A549 (cell line): ENCODE measurements at regions of chr5 and their contacts with region 1.

Region 1: GRCh38 chr5:98911280-98912040 is 17.3 kb downstream of the CHD1 start:
- DNase-seq: no peak
- ATAC-seq: no peak
- H3K4me3 ChIP-seq: no peak overlapping the region
- H3K27ac ChIP-seq: no peak overlapping the region
- H3K4me1 ChIP-seq: peaks cover 2% of the 10 kb centered on the region; the same call in 2 of the 3 replicates
- CTCF ChIP-seq: no peak
- EP300 ChIP-seq: no peak
- POLR2A ChIP-seq: no peak
- RAD21 ChIP-seq: no peak

Region 2: GRCh38 chr5:98604721-98605425 is 306.6 kb before region 1 on chr5:
- CTCF ChIA-PET with region 1: no interaction called
- POLR2A ChIA-PET with region 1: no interaction called
- DNase-seq: no peak
- ATAC-seq: no peak
- H3K4me3 ChIP-seq: no peak overlapping the region
- H3K27ac ChIP-seq: no peak overlapping the region
- H3K4me1 ChIP-seq: no peaks in the 10 kb centered on the region
- CTCF ChIP-seq: no peak
- EP300 ChIP-seq: no peak
- POLR2A ChIP-seq: no peak
- RAD21 ChIP-seq: no peak

Region 3: DNA sequence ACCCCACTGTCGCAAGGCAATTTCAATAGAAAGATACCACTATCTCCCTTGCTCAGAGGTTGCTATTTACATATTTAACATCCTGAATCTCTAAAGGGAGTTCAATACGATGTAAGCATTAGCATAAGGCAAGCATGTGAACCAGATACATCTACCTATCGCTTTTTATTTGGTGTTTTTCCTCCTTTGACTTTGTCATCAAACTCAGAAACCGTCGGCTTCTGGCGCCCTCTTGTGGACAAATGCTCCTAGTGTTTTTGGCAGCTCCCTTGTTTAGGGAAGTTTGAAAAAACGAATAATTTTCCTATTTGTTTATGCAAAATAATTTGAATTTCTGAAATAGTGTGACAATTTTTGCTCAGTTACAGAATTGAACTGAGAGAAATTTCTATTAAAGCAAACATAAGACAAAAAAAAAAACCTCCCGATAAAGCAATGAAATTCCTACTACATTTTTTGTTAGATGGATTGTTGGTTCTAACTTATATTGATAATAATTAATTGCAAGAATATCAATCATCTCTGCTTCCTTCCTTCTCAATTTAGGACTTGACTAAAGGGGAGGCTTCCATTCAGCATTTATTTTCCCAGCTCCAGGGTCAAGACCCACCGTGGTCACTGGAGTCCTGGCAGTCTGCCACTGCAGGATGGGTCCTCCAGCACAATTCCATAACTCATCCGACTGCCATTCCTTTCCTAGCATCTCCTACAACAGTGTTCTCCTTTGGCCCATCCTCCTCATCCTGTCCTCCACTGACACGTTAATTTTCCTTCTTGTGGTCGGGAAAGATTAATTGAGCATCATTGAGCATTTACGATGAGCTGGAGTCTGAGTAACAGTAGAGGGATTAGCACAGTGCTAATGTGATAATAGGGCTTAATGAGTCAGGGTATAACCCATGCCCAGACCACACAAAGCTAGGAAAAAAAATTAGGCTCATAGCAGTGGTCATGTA is 149.1 kb after region 1 on chr5:
- CTCF ChIA-PET with region 1: interaction called, 11 read pairs
- POLR2A ChIA-PET with region 1: no interaction called
- DNase-seq: peak; percentile 60 to 63
- ATAC-seq: peak; percentile 67 to 83; a peak in 5 of 6 replicates
- H3K4me3 ChIP-seq: no peak overlapping the region
- H3K27ac ChIP-seq: no peak overlapping the region
- H3K4me1 ChIP-seq: 0 out of 3 replicates have a peak, but pooled peaks cover 4% of the 10 kb centered on the region
- CTCF ChIP-seq: peak; percentile 90
- EP300 ChIP-seq: no peak
- POLR2A ChIP-seq: no peak
- RAD21 ChIP-seq: peak; percentile 80 to 81